Right cardiac atrium (tissue), 5 donors: ENCODE measurements at regions of chr16 and their contacts with region 1.

Region 1: DNA sequence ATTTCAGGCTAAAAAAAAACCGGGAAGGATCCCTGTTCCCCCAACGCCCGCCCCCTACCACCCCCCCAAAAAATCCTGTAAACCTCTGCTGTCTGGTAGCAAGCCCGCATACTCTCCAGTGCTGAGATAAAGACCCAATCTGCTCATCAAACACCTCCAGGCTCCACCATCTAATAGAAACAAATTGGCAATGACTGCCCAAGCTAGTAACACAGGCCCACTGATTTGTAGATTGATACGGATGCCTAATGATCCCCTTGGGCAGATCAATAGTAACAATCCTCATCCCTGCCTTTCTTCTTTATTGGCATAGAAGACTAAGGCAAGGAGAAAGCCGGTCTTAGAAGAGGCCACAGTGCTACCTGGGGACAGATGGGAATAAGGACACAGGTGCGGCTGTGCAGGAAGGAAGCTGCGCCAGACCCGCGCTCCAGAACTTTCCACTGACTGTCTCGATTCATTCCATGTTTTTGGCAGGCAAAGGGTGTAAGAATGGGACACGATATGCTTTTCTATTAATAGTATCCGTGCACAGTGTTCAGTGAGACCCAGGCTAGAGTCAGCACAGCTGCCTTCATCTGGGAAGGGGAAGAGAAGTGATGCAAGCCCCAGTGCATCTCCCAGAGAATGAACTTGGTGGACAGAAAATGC is 407.6 kb upstream of the PSMD7 start:
- DNase-seq: no peak
- ATAC-seq: peak in 1 of 2 donors; percentile 68
- H3K4me3 ChIP-seq: no peak overlapping the region
- H3K27ac ChIP-seq: no peak overlapping the region
- H3K4me1 ChIP-seq: peaks cover 2% of the 10 kb centered on the region
- H3K27me3 ChIP-seq: peaks cover 2% of the 10 kb centered on the region

Region 2: GRCh38 chr16:72124761-72125634 is 1764.0 kb before region 1 on chr16:
- intact Hi-C with region 1: loop called in 1 of 4 experiments (anchors 10 kb)
- DNase-seq: peak; percentile 64 to 85 (median 79)
- ATAC-seq: peak; percentile 76 to 79
- H3K4me3 ChIP-seq: no peak overlapping the region
- H3K27ac ChIP-seq: no peak overlapping the region
- H3K4me1 ChIP-seq: no peaks in the 10 kb centered on the region
- H3K27me3 ChIP-seq: no peaks in the 10 kb centered on the region

Region 3: DNA sequence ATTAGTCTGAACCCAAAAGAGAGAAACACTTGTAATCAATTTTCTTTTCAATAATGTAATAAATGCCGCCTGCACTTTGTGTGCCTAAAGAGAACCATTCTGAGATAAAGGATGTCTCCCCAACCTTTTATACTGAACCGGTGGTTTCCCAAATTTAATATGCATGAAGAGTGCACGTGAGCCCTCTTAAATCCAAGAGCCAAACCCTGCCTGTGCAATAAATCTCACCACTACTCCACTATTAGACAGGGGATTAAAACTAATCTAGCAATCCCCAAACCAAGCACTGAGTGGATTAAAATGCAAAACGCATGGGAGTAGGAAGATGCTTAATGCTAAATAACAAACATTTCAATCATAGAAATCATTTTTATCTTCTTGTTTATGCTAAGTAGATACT is 56.7 kb after region 1 on chr16:
- intact Hi-C with region 1: no loop called
- DNase-seq: no peak
- ATAC-seq: no peak
- H3K4me3 ChIP-seq: no peak overlapping the region
- H3K27ac ChIP-seq: no peak overlapping the region
- H3K4me1 ChIP-seq: no peaks in the 10 kb centered on the region
- H3K27me3 ChIP-seq: no peaks in the 10 kb centered on the region